ENCODE measurements at regions of chr7 and their contacts with region 1.

Region 1: GRCh38 chr7:100705753-100706671 is at the start of gene POP7:
- DNase-seq: peak; percentile 97
- H3K4me3 ChIP-seq: peak within 1 kb of the TSS; percentile 87
- H3K27ac ChIP-seq: peak within 1 kb of the TSS; percentile 82
- H3K27me3 ChIP-seq: peaks cover 2% of the 10 kb centered on the region
- CTCF ChIP-seq: no peak
- polyA plus RNA-seq, gene POP7: 17.7 and 20.0 TPM in 2 replicates

Region 2: DNA sequence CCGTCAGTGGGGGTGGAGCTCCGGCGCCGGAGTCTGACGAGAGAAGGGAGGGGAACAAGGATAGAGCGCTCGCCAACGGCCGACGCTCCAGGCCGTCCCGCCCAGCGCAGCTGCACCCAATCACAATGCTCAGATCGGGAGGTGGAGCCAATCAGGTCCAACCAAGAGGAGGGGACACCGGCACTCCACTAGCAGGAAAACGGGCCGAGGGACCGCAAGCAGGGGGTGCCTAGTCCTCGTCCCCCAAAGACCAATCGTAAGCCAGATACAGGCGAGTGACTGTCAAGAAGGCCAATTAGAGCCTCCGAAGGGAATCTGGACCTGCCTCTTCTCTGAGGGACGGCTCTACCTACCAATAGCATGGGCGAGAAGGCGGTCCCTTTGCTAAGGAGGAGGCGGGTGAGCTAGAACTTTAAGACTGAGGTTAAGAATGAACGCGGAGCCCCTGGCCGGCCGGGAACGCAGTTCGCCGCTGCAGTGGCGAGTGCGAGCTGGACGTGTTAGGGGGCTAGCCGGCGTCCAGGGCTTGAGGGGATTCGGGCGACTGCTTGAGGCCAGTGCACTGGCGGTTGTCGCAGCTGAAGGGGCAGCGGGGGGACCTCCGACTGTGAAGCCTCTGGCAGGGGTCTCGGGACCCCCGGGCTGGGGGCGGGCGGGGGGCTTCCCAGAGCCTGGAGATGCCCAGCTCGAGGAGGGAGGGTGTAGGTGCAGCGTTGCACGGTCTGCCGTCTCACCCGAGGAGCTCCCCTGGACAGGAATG is 119.6 kb before region 1 on chr7 and contains the start of gene FBXO24:
- CTCF ChIA-PET with region 1: interaction called, 17 read pairs
- POLR2A ChIA-PET with region 1: interaction called, 13 read pairs
- DNase-seq: peak; percentile 100
- H3K4me3 ChIP-seq: peak within 1 kb of the TSS; percentile 99
- H3K27ac ChIP-seq: peak within 1 kb of the TSS; percentile 87
- H3K27me3 ChIP-seq: no peaks in the 10 kb centered on the region
- CTCF ChIP-seq: no peak
- polyA plus RNA-seq, gene FBXO24: 0.29 and 0.33 TPM in 2 replicates

Region 3: GRCh38 chr7:100719523-100720319 is 13.7 kb after region 1 on chr7:
- CTCF ChIA-PET with region 1: interaction called, 25 read pairs
- POLR2A ChIA-PET with region 1: no interaction called
- DNase-seq: peak; percentile 11
- H3K4me3 ChIP-seq: no peak overlapping the region
- H3K27ac ChIP-seq: no peak overlapping the region
- H3K27me3 ChIP-seq: peaks cover 59% of the 10 kb centered on the region
- CTCF ChIP-seq: peak; percentile 49

Region 4: GRCh38 chr7:100763556-100764140 is 57.6 kb after region 1 on chr7:
- CTCF ChIA-PET with region 1: interaction called, 3 read pairs
- POLR2A ChIA-PET with region 1: interaction called, 12 read pairs
- DNase-seq: no peak
- H3K4me3 ChIP-seq: no peak overlapping the region
- H3K27ac ChIP-seq: no peak overlapping the region
- H3K27me3 ChIP-seq: peaks cover 38% of the 10 kb centered on the region
- CTCF ChIP-seq: no peak

Region 5: DNA sequence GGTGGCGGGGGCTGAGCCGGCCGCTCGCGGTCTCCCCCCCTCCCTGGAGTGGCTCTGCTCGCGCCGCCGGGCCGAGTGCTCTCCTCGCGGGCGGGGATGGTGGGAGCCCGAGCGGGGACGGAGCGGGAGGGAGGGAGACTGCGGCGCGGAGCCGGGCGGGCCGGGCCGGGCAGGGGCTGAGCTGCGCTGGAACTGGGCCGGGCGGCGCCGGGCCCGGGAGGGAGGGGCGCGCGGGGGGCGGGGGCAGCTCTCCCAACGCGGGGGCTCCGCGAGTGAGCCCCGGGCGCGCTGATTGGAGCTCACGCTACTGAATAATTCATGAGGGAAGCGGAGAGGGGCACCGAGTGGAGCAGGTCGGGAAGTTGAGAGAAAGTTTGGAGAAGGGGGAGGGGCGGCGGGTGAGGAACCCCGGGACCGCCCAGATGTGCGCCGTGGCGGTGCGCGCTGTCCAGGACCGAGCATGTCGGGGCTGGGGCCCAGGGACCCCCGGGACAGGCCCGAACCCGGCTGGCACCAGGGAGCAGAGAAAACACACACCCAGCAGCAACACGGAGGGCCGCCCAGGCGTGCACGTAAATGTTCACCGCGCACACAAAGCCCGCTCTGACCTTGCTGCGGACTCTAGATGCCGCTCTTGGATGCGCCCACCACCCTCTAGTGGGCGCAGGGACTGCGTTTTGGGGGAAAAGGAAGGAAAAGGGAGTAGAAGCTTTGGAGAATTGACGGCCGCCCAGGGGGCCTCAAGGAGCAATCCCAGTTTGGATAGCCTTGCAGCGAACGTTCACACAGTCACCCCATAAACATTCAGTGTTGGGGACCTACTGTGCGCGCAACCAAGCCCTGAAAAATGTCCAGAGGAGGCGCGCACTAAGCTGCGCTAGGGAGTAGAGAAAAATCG is 121.6 kb after region 1 on chr7 and contains the start of gene EPHB4:
- CTCF ChIA-PET with region 1: interaction called, 21 read pairs
- POLR2A ChIA-PET with region 1: interaction called, 9 read pairs
- DNase-seq: peak; percentile 72
- H3K4me3 ChIP-seq: peak within 1 kb of the TSS; percentile 78
- H3K27ac ChIP-seq: peak within 1 kb of the TSS; percentile 73
- H3K27me3 ChIP-seq: no peaks in the 10 kb centered on the region
- CTCF ChIP-seq: peak; percentile 73
- polyA plus RNA-seq, gene EPHB4: 43.8 and 46.5 TPM in 2 replicates

Region 6: DNA sequence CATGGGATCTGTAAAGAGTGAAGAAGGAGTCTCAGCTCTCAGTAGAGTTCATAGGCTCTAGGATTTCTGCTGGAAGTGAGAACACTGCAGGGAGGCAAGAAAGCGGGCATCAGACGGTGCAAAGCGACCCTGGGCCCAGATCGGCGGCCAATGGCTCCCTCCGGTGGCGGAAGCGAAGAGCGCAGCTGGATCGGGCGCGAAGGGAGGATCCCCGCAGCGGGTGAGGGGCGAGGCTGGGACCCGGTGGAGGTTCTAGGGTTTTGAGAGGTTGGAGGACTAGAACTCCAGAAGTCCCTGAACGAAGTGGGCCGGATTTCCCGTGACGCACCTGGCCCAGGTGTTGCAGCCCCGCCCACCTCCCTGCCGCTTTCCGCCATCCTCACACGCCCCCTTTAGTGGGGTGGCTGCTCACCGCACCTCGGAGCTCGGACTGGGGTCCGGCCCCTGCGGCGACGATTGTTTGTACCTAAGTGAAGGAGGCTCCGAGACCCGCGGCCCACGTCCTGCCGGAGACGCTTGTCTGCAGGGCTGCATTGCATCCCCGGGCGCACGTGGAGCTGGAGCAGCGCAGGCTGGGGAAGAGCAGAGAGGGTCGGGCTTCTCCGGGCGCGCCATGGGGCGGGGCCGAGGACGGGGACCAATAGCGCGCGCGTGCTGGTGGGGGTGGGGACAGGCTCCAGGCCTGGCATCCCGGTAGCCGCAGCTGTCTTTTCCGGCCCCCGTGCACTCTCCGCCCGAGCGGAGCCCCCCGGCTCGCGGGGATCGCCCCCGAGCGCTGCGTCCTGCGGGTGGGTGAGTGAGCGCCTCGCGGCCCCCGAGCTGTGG is 146.2 kb after region 1 on chr7 and contains the start of gene SLC12A9:
- CTCF ChIA-PET with region 1: interaction called, 165 read pairs
- POLR2A ChIA-PET with region 1: interaction called, 17 read pairs
- DNase-seq: peak; percentile 73
- H3K4me3 ChIP-seq: peak within 1 kb of the TSS; percentile 83
- H3K27ac ChIP-seq: no peak within 1 kb of the TSS
- H3K27me3 ChIP-seq: no peaks in the 10 kb centered on the region
- CTCF ChIP-seq: peak; percentile 89
- polyA plus RNA-seq, gene SLC12A9: 10.8 and 11.2 TPM in 2 replicates